ENCODE measurements at regions of chr3 and their contacts with region 1.

Region 1: GRCh38 chr3:168459226-168459784 is 363.6 kb upstream of the GOLIM4 start:
- DNase-seq: no peak
- ATAC-seq: no peak
- H3K4me3 ChIP-seq: no peak overlapping the region
- H3K27ac ChIP-seq: no peak overlapping the region
- H3K4me1 ChIP-seq: no peaks in the 10 kb centered on the region
- H3K27me3 ChIP-seq: no peaks in the 10 kb centered on the region
- CTCF ChIP-seq: no peak
- POLR2A ChIP-seq: no peak

Region 2: DNA sequence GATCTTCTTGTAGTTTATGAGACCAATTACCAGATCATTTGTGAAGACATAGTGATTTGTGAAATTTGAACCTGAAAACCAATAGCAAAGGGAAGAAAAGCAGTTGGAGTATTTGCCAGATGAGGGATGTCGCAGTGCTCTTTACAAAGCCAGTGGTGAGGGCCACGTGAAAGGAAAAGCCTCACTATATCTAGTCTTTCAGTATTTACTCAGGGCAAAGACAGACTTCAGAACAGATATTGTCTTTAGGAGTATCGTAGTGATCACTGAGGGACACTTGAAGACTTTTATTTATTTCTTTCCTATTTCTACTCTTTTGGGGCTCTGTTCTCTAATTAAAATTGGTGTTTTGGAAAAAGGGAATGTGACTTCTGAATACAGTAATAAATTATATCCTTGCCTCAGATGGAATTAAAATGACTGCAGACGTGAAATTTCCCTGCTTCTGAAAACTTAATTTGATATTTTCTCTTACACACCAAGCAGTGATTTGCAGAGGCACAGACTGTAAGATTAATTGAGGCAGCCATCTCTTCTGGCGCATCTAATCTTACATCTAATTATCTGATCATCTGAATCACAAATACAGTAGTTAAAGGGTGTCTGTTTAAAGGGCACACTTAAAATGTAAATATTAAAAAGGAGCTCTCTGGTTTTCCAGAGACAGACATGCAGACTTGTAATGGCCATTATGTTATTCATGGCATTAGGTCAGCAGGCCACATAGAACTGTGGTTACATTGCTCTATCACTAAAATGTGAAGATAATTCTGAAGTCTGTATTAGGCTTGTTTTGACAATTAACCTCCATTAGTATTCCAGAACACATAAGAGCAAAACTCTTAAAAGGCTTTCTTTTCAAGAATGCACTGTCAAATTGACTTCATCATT is 170.5 kb before region 1 on chr3:
- intact Hi-C with region 1: no loop called
- DNase-seq: no peak
- ATAC-seq: no peak
- H3K4me3 ChIP-seq: no peak overlapping the region
- H3K27ac ChIP-seq: no peak overlapping the region
- H3K4me1 ChIP-seq: no peaks in the 10 kb centered on the region
- H3K27me3 ChIP-seq: no peaks in the 10 kb centered on the region
- CTCF ChIP-seq: no peak
- POLR2A ChIP-seq: no peak

Region 3: DNA sequence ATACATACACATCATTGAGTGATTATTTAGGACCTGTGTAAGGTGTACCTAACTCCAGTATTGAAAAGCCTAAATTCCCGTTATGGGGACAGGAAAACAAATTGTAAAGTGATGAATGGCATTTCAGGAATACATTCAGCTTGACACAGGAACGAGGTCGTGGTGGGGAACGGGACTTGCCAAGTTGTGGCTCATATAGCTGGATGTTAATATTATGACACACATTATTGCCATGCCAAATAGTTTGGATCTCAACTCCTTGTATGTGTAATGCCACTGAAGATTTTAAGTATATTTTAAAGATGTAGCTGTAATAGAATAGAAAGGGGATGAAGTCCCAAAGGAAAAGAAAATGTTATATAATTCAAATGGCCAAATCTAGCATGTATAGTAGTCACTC is 136.4 kb before region 1 on chr3:
- intact Hi-C with region 1: loop called in 1 of 10 experiments (anchors 10 kb)
- DNase-seq: no peak
- ATAC-seq: no peak
- H3K4me3 ChIP-seq: no peak overlapping the region
- H3K27ac ChIP-seq: no peak overlapping the region
- H3K4me1 ChIP-seq: no peaks in the 10 kb centered on the region
- H3K27me3 ChIP-seq: no peaks in the 10 kb centered on the region
- CTCF ChIP-seq: no peak
- POLR2A ChIP-seq: no peak